ENCODE measurements at regions of chr5 and their contacts with region 1.

Region 1: GRCh38 chr5:42423285-42424165 is at the start of gene GHR:
- DNase-seq: peak; percentile 89
- H3K4me3 ChIP-seq: peak within 1 kb of the TSS; percentile 8 to 39 (median 18)
- H3K27ac ChIP-seq: no peak within 1 kb of the TSS
- H3K4me1 ChIP-seq: peaks cover 4% of the 10 kb centered on the region
- H3K27me3 ChIP-seq: peaks cover 12% of the 10 kb centered on the region in 2 experiments
- CTCF ChIP-seq: peak; percentile 60 to 74
- POLR2A ChIP-seq: no peak
- total RNA-seq, gene GHR: 0.27 and 0.39 TPM in 2 replicates

Region 2: GRCh38 chr5:41809128-41809527 is 614.4 kb before region 1 on chr5:
- CTCF ChIA-PET with region 1: no interaction called
- POLR2A ChIA-PET with region 1: no interaction called
- dilution Hi-C with region 1: no loop called
- intact Hi-C with region 1: no loop called
- DNase-seq: no peak
- H3K4me3 ChIP-seq: no peak overlapping the region
- H3K27ac ChIP-seq: no peak overlapping the region
- H3K4me1 ChIP-seq: peaks cover 24% of the 10 kb centered on the region
- H3K27me3 ChIP-seq: no peaks in the 10 kb centered on the region
- CTCF ChIP-seq: no peak
- POLR2A ChIP-seq: no peak

Region 3: GRCh38 chr5:42434047-42434724 is 10.7 kb after region 1 on chr5:
- CTCF ChIA-PET with region 1: interaction called, 12 read pairs
- POLR2A ChIA-PET with region 1: no interaction called
- dilution Hi-C with region 1: no loop called
- intact Hi-C with region 1: no loop called
- DNase-seq: no peak
- H3K4me3 ChIP-seq: no peak overlapping the region
- H3K27ac ChIP-seq: no peak overlapping the region
- H3K4me1 ChIP-seq: no peaks in the 10 kb centered on the region
- H3K27me3 ChIP-seq: no peaks in the 10 kb centered on the region
- CTCF ChIP-seq: no peak
- POLR2A ChIP-seq: no peak

Region 4: GRCh38 chr5:42636425-42636824 is 212.9 kb after region 1 on chr5:
- CTCF ChIA-PET with region 1: no interaction called
- POLR2A ChIA-PET with region 1: no interaction called
- dilution Hi-C with region 1: no loop called
- intact Hi-C with region 1: loop called (anchors 1 kb)
- DNase-seq: no peak
- H3K4me3 ChIP-seq: no peak overlapping the region
- H3K27ac ChIP-seq: no peak overlapping the region
- H3K4me1 ChIP-seq: no peaks in the 10 kb centered on the region
- H3K27me3 ChIP-seq: no peaks in the 10 kb centered on the region
- CTCF ChIP-seq: peak in 1 of 2 donors; percentile 6
- POLR2A ChIP-seq: no peak